Tibial artery (tissue), 4 donors: ENCODE measurements at regions of chr10 and their contacts with region 1.

Region 1: DNA sequence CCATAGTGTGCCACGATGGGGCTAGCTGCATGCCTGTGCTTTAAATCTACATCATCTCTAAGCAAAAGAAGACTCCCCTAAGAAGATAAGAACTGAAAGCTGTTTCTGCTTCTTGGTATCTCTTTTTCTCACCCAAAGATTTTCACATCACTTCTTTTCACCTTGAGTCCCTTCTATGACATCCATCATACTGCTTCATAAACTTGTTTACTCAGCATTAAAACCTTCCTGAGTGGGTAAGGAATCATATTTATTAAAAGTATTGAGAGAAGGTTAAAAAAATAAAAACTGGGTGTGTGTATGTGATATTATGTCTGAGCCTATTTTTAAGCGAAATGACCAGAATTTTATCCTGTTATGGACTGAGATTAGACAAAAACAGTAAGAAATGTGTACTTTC is 150.3 kb downstream of the HPSE2 start:
- DNase-seq: no peak
- H3K4me3 ChIP-seq: no peak overlapping the region
- H3K27ac ChIP-seq: peak overlapping the region; percentile 49 to 70
- H3K4me1 ChIP-seq: peaks cover 0 to 69% (median 4%) of the 10 kb centered on the region in 4 donors
- H3K27me3 ChIP-seq: no peaks in the 10 kb centered on the region
- CTCF ChIP-seq: no peak

Region 2: GRCh38 chr10:98971464-98971863 is 113.9 kb before region 1 on chr10:
- intact Hi-C with region 1: loop called (anchors 10 kb)
- DNase-seq: no peak
- H3K4me3 ChIP-seq: no peak overlapping the region
- H3K27ac ChIP-seq: no peak overlapping the region
- H3K4me1 ChIP-seq: peaks cover 0 to 22% (median 4%) of the 10 kb centered on the region in 4 donors
- H3K27me3 ChIP-seq: no peaks in the 10 kb centered on the region
- CTCF ChIP-seq: no peak